ENCODE measurements at regions of chr7 and their contacts with region 1.

Region 1: GRCh38 chr7:85695041-85695996 is 508.5 kb upstream of the SEMA3D start:
- DNase-seq: no peak
- H3K4me3 ChIP-seq: no peak overlapping the region
- CTCF ChIP-seq: no peak

Region 2: GRCh38 chr7:84654273-84654672 is 1041.0 kb before region 1 on chr7:
- in situ Hi-C with region 1: no loop called
- DNase-seq: no peak
- H3K4me3 ChIP-seq: no peak overlapping the region
- CTCF ChIP-seq: no peak

Region 3: GRCh38 chr7:85068799-85069198 is 626.5 kb before region 1 on chr7:
- in situ Hi-C with region 1: loop called (anchors 25 kb)
- DNase-seq: peak; percentile 62
- H3K4me3 ChIP-seq: no peak overlapping the region
- CTCF ChIP-seq: no peak

Region 4: GRCh38 chr7:85471740-85472139 is 223.6 kb before region 1 on chr7:
- in situ Hi-C with region 1: loop called (anchors 25 kb)
- DNase-seq: no peak
- H3K4me3 ChIP-seq: no peak overlapping the region
- CTCF ChIP-seq: no peak

Region 5: GRCh38 chr7:85776691-85777345 is 81.5 kb after region 1 on chr7:
- in situ Hi-C with region 1: loop called (anchors 25 kb)
- DNase-seq: no peak
- H3K4me3 ChIP-seq: no peak overlapping the region
- CTCF ChIP-seq: no peak